Naive thymus-derived CD4-positive, alpha-beta T cell (primary cell): ENCODE measurements at regions of chr4 and their contacts with region 1.

Region 1: GRCh38 chr4:77075869-77076799 is at the start of gene CCNI:
- DNase-seq: peak; percentile 90 to 96 (median 95)
- ATAC-seq: peak; percentile 88
- H3K4me3 ChIP-seq: peak within 1 kb of the TSS; percentile 86
- H3K4me3 Mint-ChIP-seq: peak within 1 kb of the TSS in 4 of 10 donors; percentile 98 to 99 (median 99)
- H3K27ac ChIP-seq: peak within 1 kb of the TSS; percentile 98
- H3K27ac Mint-ChIP-seq: peak within 1 kb of the TSS in 5 of 9 donors; percentile 100
- H3K4me1 ChIP-seq: peaks cover 14 to 28% of the 10 kb centered on the region in 2 donors
- H3K4me1 Mint-ChIP-seq: peaks cover 28 to 54% (median 43%) of the 10 kb centered on the region in 7 donors
- H3K27me3 ChIP-seq: no peaks in the 10 kb centered on the region
- H3K27me3 Mint-ChIP-seq: peaks cover 0 to 7% (median 0%) of the 10 kb centered on the region in 5 donors
- total RNA-seq, gene CCNI: 206 to 393 (median 314) TPM

Region 2: DNA sequence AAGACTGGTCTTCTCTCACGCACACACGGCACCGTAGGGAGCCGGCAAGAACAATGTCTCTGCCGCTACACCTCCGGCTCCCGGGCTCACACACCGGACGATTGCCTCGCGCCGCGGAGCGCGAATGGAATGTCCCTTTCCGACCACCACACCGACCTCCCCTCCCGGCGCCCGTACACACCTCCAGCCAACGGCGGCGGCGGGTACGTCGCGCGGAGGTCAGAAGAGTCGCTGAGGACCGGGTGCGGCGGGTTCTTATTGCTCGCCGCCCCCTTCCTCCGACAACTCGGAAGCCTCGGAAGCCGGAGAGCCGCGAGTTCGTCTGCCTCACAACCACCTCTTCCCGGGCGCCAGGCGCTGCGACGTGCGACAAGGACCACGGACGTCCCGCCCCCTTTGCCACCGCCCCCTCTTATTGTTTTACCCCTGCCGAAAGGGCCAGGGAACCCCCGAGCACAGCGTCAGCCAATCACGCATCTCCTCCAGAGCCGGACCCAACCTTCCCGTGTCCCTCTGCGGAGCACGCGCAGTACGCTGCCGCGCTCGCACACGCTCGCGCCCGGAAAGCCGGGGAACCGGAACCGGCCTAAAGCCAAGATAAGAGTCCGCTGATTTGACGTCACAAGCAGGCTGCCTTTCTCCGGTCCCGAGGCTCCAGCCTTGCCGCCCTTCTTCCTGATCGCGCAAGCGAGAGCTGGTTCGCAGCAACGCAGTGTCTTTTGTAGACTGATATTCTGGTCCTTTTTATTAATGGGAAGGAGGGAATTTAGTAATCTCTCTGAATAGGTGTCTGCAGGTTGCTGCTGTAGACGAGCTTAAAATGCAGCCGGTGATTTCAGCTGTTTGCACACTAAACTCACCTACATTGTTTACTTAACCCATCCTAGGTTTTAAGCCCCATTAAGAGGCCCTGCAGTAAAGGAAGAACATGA is 1402.8 kb before region 1 on chr4 and contains the start of gene G3BP2:
- CTCF ChIA-PET with region 1: no interaction called
- POLR2A ChIA-PET with region 1: no interaction called
- intact Hi-C with region 1: loop called (anchors 1 kb)
- DNase-seq: peak; percentile 87 to 99 (median 97)
- ATAC-seq: peak; percentile 97
- H3K4me3 ChIP-seq: peak within 1 kb of the TSS; percentile 91
- H3K4me3 Mint-ChIP-seq: peak within 1 kb of the TSS; percentile 96 to 100 (median 98)
- H3K27ac ChIP-seq: peak within 1 kb of the TSS; percentile 96
- H3K27ac Mint-ChIP-seq: peak within 1 kb of the TSS; percentile 92 to 100 (median 99)
- H3K4me1 ChIP-seq: peaks cover 38 to 43% of the 10 kb centered on the region in 2 donors
- H3K4me1 Mint-ChIP-seq: peaks cover 36 to 47% (median 44%) of the 10 kb centered on the region in 7 donors
- H3K27me3 ChIP-seq: no peaks in the 10 kb centered on the region
- H3K27me3 Mint-ChIP-seq: no peaks in the 10 kb centered on the region
- total RNA-seq, gene G3BP2: 161 to 299 (median 167) TPM

Region 3: DNA sequence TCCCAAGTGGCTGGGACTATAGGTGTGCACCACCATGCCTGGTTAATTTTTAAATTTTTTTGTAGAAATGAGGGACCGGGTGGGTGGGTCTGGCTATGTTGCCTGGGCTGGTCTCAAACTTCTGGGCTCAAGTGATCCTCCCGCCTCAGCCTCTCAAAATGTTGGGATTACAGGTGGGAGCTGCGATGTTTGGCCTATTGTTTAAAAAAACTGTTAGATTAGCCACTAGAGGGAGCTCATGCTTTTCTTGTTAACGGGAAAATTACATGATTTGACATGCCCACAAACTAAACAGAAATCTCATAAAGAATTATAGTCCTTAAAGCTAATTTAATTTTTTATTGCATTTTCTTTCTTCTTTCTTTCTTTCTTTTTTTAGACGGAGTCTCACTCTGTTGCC is 1080.4 kb before region 1 on chr4:
- CTCF ChIA-PET with region 1: interaction called, 3 read pairs
- POLR2A ChIA-PET with region 1: no interaction called
- intact Hi-C with region 1: loop called in 1 of 2 experiments (anchors 1 kb)
- DNase-seq: peak in 7 of 9 donors; percentile 13 to 62 (median 43)
- ATAC-seq: peak; percentile 39
- H3K4me3 ChIP-seq: no peak overlapping the region
- H3K4me3 Mint-ChIP-seq: no peak overlapping the region
- H3K27ac ChIP-seq: no peak overlapping the region
- H3K27ac Mint-ChIP-seq: no peak overlapping the region
- H3K4me1 ChIP-seq: no peaks in the 10 kb centered on the region
- H3K4me1 Mint-ChIP-seq: peaks cover 0 to 10% (median 5%) of the 10 kb centered on the region in 7 donors
- H3K27me3 ChIP-seq: no peaks in the 10 kb centered on the region
- H3K27me3 Mint-ChIP-seq: peaks cover 0 to 10% (median 2%) of the 10 kb centered on the region in 5 donors

Region 4: GRCh38 chr4:76949276-76950051 is 126.7 kb before region 1 on chr4 and contains the start of gene SEPTIN11:
- CTCF ChIA-PET with region 1: no interaction called
- POLR2A ChIA-PET with region 1: interaction called, 3 read pairs
- intact Hi-C with region 1: loop called in 1 of 2 experiments (anchors 1 kb)
- DNase-seq: peak; percentile 56 to 78 (median 72)
- ATAC-seq: peak; percentile 87
- H3K4me3 ChIP-seq: peak within 1 kb of the TSS; percentile 80
- H3K4me3 Mint-ChIP-seq: peak within 1 kb of the TSS; percentile 70 to 97 (median 88)
- H3K27ac ChIP-seq: peak within 1 kb of the TSS; percentile 58
- H3K27ac Mint-ChIP-seq: peak within 1 kb of the TSS in 7 of 9 donors; percentile 28 to 82 (median 71)
- H3K4me1 ChIP-seq: peaks cover 0 to 10% of the 10 kb centered on the region in 2 donors
- H3K4me1 Mint-ChIP-seq: peaks cover 8 to 23% (median 16%) of the 10 kb centered on the region in 7 donors
- H3K27me3 ChIP-seq: peaks cover 0 to 6% of the 10 kb centered on the region in 2 donors
- H3K27me3 Mint-ChIP-seq: peaks cover 0 to 71% (median 4%) of the 10 kb centered on the region in 5 donors
- total RNA-seq, gene SEPTIN11: 12.2 to 29.3 (median 20.3) TPM

Region 5: GRCh38 chr4:77065382-77065781 is 10.8 kb before region 1 on chr4:
- CTCF ChIA-PET with region 1: interaction called, 3 read pairs
- POLR2A ChIA-PET with region 1: interaction called, 4 read pairs
- intact Hi-C with region 1: loop called in 1 of 2 experiments (anchors 1 kb)
- DNase-seq: no peak
- ATAC-seq: no peak
- H3K4me3 ChIP-seq: no peak overlapping the region
- H3K4me3 Mint-ChIP-seq: no peak overlapping the region
- H3K27ac ChIP-seq: no peak overlapping the region
- H3K27ac Mint-ChIP-seq: peak overlapping the region in 3 of 9 donors; percentile 25 to 77 (median 59)
- H3K4me1 ChIP-seq: peaks cover 0 to 7% of the 10 kb centered on the region in 2 donors
- H3K4me1 Mint-ChIP-seq: peaks cover 26 to 57% (median 43%) of the 10 kb centered on the region in 7 donors
- H3K27me3 ChIP-seq: no peaks in the 10 kb centered on the region
- H3K27me3 Mint-ChIP-seq: no peaks in the 10 kb centered on the region

Region 6: DNA sequence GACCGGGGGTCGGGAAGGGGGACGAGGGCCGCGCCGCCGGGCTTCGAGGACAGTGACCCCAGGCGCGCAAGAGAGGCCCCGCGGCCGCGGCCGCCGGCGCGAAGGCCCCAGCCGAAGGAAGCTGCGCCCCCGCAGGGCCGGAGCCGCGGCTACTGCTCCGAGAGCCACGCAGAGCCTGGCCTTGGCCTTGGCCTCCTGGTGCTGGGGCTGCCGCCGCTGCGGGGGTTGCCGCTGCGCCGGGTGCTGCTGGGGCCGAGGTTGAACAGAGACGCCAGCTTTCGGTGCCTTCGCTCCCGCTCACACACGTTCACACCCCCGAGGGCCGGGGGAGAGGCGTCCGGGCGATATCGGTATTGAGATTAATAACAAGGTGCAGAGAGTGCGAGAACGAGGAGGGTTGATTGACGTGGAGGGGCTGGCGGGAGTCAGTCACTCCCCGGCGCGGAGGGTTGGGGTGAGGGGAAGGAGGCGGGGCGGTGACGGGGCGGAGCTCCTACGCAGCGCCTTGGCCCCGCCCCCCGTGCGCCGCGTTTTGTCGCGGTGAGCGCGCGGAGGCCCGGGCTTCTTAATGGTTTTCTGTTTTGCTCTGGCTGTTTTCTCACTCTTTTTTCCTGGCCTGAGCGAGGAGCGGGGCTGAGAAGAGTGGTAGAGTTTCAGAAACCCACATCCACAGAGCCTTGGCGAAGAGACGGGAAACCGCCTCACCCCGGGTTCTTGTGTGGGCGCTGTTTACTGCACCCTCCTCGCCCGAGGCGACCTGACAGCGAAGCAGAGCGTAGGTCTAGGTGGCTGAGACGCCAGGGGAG is 743.9 kb after region 1 on chr4:
- CTCF ChIA-PET with region 1: no interaction called
- POLR2A ChIA-PET with region 1: no interaction called
- intact Hi-C with region 1: loop called (anchors 1 to 5 kb)
- DNase-seq: peak; percentile 95 to 99 (median 98)
- ATAC-seq: peak; percentile 87
- H3K4me3 ChIP-seq: peak overlapping the region; percentile 93
- H3K4me3 Mint-ChIP-seq: peak overlapping the region; percentile 93 to 99 (median 96)
- H3K27ac ChIP-seq: peak overlapping the region; percentile 100
- H3K27ac Mint-ChIP-seq: peak overlapping the region; percentile 88 to 100 (median 99)
- H3K4me1 ChIP-seq: peaks cover 39 to 42% of the 10 kb centered on the region in 2 donors
- H3K4me1 Mint-ChIP-seq: peaks cover 37 to 69% (median 53%) of the 10 kb centered on the region in 7 donors
- H3K27me3 ChIP-seq: no peaks in the 10 kb centered on the region
- H3K27me3 Mint-ChIP-seq: peaks cover 0 to 2% (median 0%) of the 10 kb centered on the region in 5 donors

Region 7: GRCh38 chr4:77938560-77938959 is 862.4 kb after region 1 on chr4:
- CTCF ChIA-PET with region 1: no interaction called
- POLR2A ChIA-PET with region 1: no interaction called
- intact Hi-C with region 1: no loop called
- DNase-seq: no peak
- ATAC-seq: no peak
- H3K4me3 ChIP-seq: no peak overlapping the region
- H3K4me3 Mint-ChIP-seq: no peak overlapping the region
- H3K27ac ChIP-seq: no peak overlapping the region
- H3K27ac Mint-ChIP-seq: no peak overlapping the region
- H3K4me1 ChIP-seq: no peaks in the 10 kb centered on the region
- H3K4me1 Mint-ChIP-seq: peaks cover 4 to 27% (median 10%) of the 10 kb centered on the region in 7 donors
- H3K27me3 ChIP-seq: no peaks in the 10 kb centered on the region
- H3K27me3 Mint-ChIP-seq: no peaks in the 10 kb centered on the region

Region 8: DNA sequence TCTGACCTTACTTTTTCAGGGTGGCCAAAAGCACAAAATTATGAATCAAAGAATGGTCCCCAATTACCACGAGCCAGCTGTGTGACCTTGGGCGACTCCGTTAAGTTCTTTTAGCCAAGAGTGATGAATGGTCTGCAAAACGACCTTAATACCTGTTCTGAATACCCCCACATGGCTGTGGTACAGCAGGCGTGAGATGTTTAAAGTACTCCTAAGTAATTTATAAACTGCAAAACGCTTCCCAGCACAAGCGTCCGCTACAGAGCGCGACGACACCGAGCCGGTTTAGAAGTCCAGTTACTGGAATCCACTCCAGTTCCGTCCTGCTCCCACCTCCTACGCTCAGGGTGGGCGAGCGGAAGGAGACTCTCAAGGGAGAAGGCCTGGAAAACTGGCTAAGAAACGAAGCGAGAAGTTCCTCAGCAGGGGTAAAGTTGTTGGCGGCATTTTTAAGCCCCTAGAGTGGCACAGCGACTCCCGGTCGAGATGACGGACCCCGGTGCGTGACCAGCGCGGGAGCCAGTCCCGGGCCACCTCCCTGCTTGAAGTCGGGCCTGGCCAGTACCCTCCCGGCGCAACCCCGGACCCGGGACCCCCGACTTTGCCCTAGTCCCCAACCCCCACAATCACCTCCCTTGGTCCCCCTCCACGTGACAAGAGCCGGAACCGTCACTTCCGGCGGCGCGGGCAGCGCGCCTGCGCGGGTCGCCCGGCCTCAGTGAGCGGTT is 1699.3 kb after region 1 on chr4:
- CTCF ChIA-PET with region 1: no interaction called
- POLR2A ChIA-PET with region 1: no interaction called
- intact Hi-C with region 1: loop called in 1 of 2 experiments (anchors 2 kb)
- DNase-seq: peak; percentile 80 to 93 (median 91)
- ATAC-seq: peak; percentile 81
- H3K4me3 ChIP-seq: peak overlapping the region; percentile 87
- H3K4me3 Mint-ChIP-seq: peak overlapping the region; percentile 88 to 97 (median 96)
- H3K27ac ChIP-seq: peak overlapping the region; percentile 78
- H3K27ac Mint-ChIP-seq: peak overlapping the region; percentile 84 to 98 (median 95)
- H3K4me1 ChIP-seq: peaks cover 4 to 14% of the 10 kb centered on the region in 2 donors
- H3K4me1 Mint-ChIP-seq: peaks cover 7 to 34% (median 13%) of the 10 kb centered on the region in 7 donors
- H3K27me3 ChIP-seq: no peaks in the 10 kb centered on the region
- H3K27me3 Mint-ChIP-seq: no peaks in the 10 kb centered on the region